ENCODE measurements at regions of chr2 and their contacts with region 1.

Region 1: GRCh38 chr2:161104054-161104553 is 56.1 kb upstream of the TANK start:
- DNase-seq: peak; percentile 53
- ATAC-seq: peak; percentile 78
- H3K4me3 ChIP-seq: no peak overlapping the region
- H3K27ac ChIP-seq: no peak overlapping the region
- H3K4me1 ChIP-seq: peaks cover 21% of the 10 kb centered on the region
- H3K27me3 ChIP-seq: no peaks in the 10 kb centered on the region
- CTCF ChIP-seq: no peak

Region 2: DNA sequence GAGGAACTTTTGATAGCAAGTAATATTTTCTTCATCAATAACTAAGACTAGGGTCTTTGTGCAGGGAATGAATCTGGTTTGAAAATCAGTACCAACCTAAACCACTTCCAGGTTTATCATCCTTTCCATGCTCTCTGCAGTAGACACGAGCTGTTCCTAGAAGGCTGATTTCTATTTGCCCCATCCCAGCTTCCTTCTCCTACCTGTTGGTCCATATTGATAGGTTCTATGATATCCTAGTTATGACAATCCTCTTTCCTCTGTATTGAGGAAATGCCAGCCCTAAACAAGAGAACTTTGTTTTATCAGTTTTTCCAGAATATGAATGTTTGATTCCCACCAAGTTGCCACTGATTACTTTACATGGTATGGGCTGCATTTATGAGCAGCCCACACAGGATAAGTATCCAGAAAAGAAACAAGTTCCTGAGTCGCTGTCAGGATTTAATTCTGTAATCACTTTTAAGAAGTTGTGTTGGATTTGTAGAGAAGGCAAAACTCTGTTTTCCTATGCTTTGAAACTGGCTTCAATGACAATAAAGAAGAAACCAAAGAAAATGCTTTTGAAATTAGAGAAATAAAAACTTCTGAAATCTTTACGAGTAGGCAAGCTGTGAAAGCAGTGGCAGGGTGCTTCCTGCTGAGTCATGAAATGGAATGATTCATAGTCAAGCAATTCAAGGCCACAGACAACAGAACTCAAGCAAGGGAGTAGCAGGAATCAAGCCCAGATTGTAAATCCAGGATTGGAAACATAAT is 18.8 kb after region 1 on chr2:
- CTCF ChIA-PET with region 1: no interaction called
- POLR2A ChIA-PET with region 1: no interaction called
- intact Hi-C with region 1: loop called (anchors 2 kb)
- DNase-seq: peak; percentile 88
- ATAC-seq: peak; percentile 97
- H3K4me3 ChIP-seq: peak overlapping the region; percentile 61
- H3K27ac ChIP-seq: peak overlapping the region; percentile 98
- H3K4me1 ChIP-seq: peaks cover 37% of the 10 kb centered on the region
- H3K27me3 ChIP-seq: no peaks in the 10 kb centered on the region
- CTCF ChIP-seq: no peak

Region 3: DNA sequence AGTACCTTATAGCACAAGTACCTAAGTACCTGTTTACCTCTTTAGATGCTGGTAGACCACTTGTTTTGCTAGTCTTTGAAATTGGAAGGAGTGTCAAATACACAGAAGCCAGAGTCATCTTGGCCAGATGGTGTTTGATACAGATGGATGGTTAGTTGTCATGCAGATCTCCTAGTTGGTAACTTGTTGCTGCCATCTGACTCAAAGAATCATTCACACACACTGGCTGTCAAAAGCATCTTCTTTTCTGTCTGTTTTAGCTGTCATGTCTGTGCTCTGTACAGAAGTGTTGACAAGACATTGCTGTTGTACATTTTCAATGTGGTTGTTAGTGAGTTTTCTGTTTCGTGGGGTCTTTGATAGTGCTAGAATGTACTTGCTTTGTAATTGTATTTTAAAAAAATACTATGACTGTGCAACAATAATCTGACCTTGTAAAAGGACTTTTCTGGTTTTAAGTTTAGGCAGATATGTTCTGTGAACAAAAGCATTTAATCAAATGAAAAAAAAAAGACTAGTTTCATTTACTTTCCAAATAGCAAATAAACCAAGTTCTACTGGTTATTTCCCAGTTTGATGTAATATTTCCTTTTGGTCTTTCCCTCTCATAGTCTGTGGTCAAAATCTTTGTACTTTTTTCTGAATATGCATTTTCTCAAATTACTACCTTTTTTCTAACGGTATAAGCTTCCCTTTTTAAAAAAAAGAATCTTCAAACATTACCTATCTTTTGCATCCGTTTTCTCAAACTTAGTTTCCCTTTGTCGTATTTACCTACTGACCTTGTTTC is 96.0 kb after region 1 on chr2:
- CTCF ChIA-PET with region 1: no interaction called
- POLR2A ChIA-PET with region 1: interaction called, 19 read pairs
- intact Hi-C with region 1: no loop called
- DNase-seq: no peak
- ATAC-seq: no peak
- H3K4me3 ChIP-seq: no peak overlapping the region
- H3K27ac ChIP-seq: no peak overlapping the region
- H3K4me1 ChIP-seq: no peaks in the 10 kb centered on the region
- H3K27me3 ChIP-seq: no peaks in the 10 kb centered on the region
- CTCF ChIP-seq: no peak

Measured in PC-3 (cell line).